ENCODE measurements at regions of chr14 and their contacts with region 1.

Region 1: DNA sequence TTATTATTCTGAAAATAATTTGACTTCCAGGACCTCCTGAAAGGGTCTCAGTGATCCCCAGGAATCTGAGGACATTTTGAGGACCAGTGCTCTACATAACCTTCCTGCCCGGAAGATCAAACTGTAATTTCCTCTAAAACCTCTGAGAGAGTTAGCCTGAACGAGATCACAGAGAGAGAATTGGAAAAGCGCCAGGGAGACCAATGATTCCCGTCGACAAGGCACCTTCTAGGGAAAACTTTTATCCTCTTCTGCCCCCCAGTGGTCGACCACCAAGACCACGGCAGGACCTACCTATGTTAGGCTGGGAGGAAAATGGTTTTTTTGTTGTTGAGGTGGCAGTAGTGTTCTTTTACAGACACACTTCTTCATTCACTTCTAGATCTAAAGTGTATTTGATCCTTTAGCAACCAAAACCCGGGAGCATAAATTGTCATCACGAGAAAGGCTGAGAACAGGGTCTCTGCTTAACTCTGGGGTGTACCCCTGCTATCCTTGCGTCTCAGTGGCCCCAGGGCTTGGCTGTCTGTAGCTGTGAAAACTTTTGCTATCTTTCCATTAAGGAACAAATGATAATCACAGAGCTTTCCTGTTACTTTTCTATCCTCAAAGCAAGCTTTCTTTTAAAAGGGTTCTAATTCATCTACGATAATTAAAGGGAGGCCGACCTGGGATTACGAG is 62.9 kb upstream of the NID2 start:
- DNase-seq: peak; percentile 57 to 71
- ATAC-seq: peak in 2 of 4 donors; percentile 37 to 50
- H3K4me3 ChIP-seq: no peak overlapping the region
- H3K27ac ChIP-seq: no peak overlapping the region
- H3K4me1 ChIP-seq: no peaks in the 10 kb centered on the region
- H3K27me3 ChIP-seq: no peaks in the 10 kb centered on the region
- CTCF ChIP-seq: peak; percentile 60

Region 2: DNA sequence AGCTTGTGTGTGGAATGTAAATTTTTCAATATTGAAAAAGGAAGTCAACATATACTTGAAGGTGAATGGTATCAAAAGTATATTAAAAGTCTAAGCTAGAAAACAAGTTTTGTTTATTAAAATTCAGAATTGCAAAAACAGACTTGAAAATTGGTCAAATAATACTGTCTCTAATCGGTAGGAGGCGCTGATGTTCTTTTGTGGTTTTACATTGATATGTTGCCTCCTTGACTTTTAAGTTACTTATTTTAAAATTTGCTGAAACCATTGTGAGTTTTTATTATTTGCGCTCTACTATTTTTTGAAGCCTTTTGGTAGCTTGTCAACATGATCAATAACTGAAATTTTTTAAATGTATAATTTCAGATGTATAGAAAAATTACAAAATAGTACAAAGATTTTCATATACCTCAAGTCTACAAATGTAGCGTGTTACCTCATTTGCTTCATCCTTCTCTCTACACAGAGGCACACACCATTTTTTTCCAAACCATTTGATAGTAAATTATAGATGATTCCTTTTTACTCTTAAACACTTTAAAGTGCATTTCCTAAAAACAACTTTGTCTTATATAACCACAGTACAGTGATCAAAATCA is 135.5 kb before region 1 on chr14:
- intact Hi-C with region 1: loop called in 1 of 2 experiments (anchors 2 kb)
- DNase-seq: no peak
- ATAC-seq: no peak
- H3K4me3 ChIP-seq: no peak overlapping the region
- H3K27ac ChIP-seq: no peak overlapping the region
- H3K4me1 ChIP-seq: peaks cover 7% of the 10 kb centered on the region
- H3K27me3 ChIP-seq: no peaks in the 10 kb centered on the region
- CTCF ChIP-seq: peak; percentile 64

Region 3: DNA sequence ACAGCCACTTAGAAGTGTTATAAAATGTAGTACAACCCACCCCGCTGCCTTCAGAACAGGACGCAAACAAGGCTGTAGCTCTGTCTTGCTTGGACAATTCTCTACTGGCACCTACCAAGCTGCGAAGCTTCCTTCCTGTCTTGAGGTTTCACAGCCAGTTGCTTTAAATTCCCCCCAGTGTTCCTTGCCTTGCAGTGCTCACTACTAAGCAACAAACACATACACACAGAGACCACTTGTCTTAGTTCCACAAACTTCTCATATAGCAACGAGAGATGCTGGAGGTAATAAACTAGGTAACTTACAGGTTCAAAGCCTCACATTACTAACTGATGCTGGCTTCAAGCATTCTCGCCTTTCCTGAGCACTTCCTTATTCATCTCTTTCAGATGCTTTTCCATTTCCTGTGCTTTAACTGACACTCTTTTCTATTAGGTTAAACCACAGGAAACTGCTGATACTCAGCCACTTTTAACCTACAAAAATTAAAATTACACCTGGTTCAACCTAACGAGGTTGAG is 44.3 kb after region 1 on chr14:
- intact Hi-C with region 1: no loop called
- DNase-seq: no peak
- ATAC-seq: no peak
- H3K4me3 ChIP-seq: no peak overlapping the region
- H3K27ac ChIP-seq: no peak overlapping the region
- H3K4me1 ChIP-seq: no peaks in the 10 kb centered on the region
- H3K27me3 ChIP-seq: no peaks in the 10 kb centered on the region
- CTCF ChIP-seq: no peak

Region 4: GRCh38 chr14:52405314-52405713 is 273.5 kb after region 1 on chr14:
- intact Hi-C with region 1: loop called in 1 of 2 experiments (anchors 5 kb)
- DNase-seq: no peak
- ATAC-seq: no peak
- H3K4me3 ChIP-seq: no peak overlapping the region
- H3K27ac ChIP-seq: no peak overlapping the region
- H3K4me1 ChIP-seq: no peaks in the 10 kb centered on the region
- H3K27me3 ChIP-seq: no peaks in the 10 kb centered on the region
- CTCF ChIP-seq: no peak

Measured in psoas muscle (tissue), 8 donors.